ENCODE measurements at regions of chr21 and their contacts with region 1.

Region 1: GRCh38 chr21:33542640-33543504 is at the start of gene SON:
- DNase-seq: peak; percentile 95
- ATAC-seq: peak; percentile 94
- H3K4me3 ChIP-seq: peak within 1 kb of the TSS; percentile 96
- H3K27ac ChIP-seq: peak within 1 kb of the TSS; percentile 100
- H3K4me1 ChIP-seq: no peaks in the 10 kb centered on the region
- H3K27me3 ChIP-seq: no peaks in the 10 kb centered on the region
- CTCF ChIP-seq: no peak
- EP300 ChIP-seq: no peak
- POLR2A ChIP-seq: peak; percentile 89
- RAD21 ChIP-seq: no peak
- polyA plus RNA-seq, gene SON: 418 to 788 TPM

Region 2: GRCh38 chr21:32770871-32771523 is 771.9 kb before region 1 on chr21:
- CTCF ChIA-PET with region 1: no interaction called
- POLR2A ChIA-PET with region 1: no interaction called
- RAD21 ChIA-PET with region 1: no interaction called
- SMC1A ChIA-PET with region 1: no interaction called
- in situ Hi-C with region 1: no loop called
- intact Hi-C with region 1: loop called (anchors 5 kb)
- DNase-seq: no peak
- ATAC-seq: peak; percentile 65
- H3K4me3 ChIP-seq: peak overlapping the region; percentile 90
- H3K27ac ChIP-seq: peak overlapping the region; percentile 87
- H3K4me1 ChIP-seq: peaks cover 9% of the 10 kb centered on the region; the same call in 1 of the 2 replicates
- H3K27me3 ChIP-seq: no peaks in the 10 kb centered on the region
- CTCF ChIP-seq: no peak
- EP300 ChIP-seq: no peak
- POLR2A ChIP-seq: 0 out of 2 replicates have a peak, but pooled peaks have one; percentile 8
- RAD21 ChIP-seq: no peak

Region 3: DNA sequence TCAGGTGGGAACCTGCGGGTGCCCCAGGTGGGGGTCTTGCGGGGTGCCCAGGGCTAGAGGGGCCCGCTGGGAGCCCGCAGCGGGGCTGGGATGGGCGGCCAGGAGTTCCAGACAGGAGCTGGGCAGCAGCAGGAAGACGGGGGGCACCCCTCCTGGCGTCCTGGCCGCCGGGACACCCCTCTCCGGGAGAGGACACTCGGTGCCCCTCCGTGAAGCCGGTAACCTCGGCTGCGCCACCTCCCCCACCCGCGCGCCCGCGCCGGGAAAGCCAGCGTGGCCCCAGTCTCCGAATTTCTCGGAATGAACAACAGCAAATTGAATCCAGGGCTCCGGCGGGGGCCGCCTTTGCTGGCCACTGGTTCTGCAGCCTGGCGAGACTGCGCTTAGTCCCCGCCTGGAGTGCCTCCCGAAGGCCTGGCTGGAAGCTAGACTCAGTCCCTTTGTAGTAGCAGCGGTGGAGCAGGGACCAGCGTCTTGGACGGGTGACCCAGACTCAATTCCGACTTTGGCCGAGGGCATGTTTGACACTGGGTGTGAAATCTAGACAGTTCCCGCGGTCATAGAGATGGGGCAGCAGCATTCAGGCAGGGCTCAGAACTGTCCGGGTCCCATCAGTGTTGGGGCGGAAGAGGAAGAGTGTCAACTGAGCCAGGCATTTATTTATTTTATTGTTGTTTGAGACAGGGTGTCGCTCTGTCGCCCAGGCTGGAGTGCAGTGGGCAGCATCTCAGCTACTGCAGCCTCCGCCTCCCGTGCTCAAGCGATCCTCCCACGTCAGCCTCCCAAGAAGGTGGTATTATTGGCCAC is 138.9 kb before region 1 on chr21:
- CTCF ChIA-PET with region 1: no interaction called
- POLR2A ChIA-PET with region 1: no interaction called
- RAD21 ChIA-PET with region 1: no interaction called
- SMC1A ChIA-PET with region 1: no interaction called
- in situ Hi-C with region 1: no loop called
- intact Hi-C with region 1: loop called (anchors 10 kb)
- DNase-seq: no peak
- ATAC-seq: peak; percentile 60
- H3K4me3 ChIP-seq: peak overlapping the region; percentile 84
- H3K27ac ChIP-seq: peak overlapping the region; percentile 97
- H3K4me1 ChIP-seq: peaks cover 15% of the 10 kb centered on the region
- H3K27me3 ChIP-seq: no peaks in the 10 kb centered on the region
- CTCF ChIP-seq: no peak
- EP300 ChIP-seq: no peak
- POLR2A ChIP-seq: peak; percentile 77
- RAD21 ChIP-seq: no peak

Region 4: GRCh38 chr21:33491373-33492102 is 51.3 kb before region 1 on chr21 and contains the start of gene DNAJC28:
- CTCF ChIA-PET with region 1: no interaction called
- POLR2A ChIA-PET with region 1: interaction called, 13 read pairs
- RAD21 ChIA-PET with region 1: interaction called, 5 read pairs
- SMC1A ChIA-PET with region 1: interaction called, 6 read pairs
- in situ Hi-C with region 1: no loop called
- intact Hi-C with region 1: no loop called
- DNase-seq: peak; percentile 80
- ATAC-seq: peak; percentile 99
- H3K4me3 ChIP-seq: peak within 1 kb of the TSS; percentile 68
- H3K27ac ChIP-seq: peak within 1 kb of the TSS; percentile 48; the same call in 1 of the 2 replicates
- H3K4me1 ChIP-seq: no peaks in the 10 kb centered on the region
- H3K27me3 ChIP-seq: no peaks in the 10 kb centered on the region
- CTCF ChIP-seq: no peak
- EP300 ChIP-seq: no peak
- POLR2A ChIP-seq: peak; percentile 65
- RAD21 ChIP-seq: no peak
- polyA plus RNA-seq, gene DNAJC28: 0.53 to 0.77 TPM

Region 5: GRCh38 chr21:33588485-33589335 is 45.8 kb after region 1 on chr21 and contains the start of gene DONSON:
- CTCF ChIA-PET with region 1: interaction called, 5 read pairs
- POLR2A ChIA-PET with region 1: interaction called, 5 read pairs
- RAD21 ChIA-PET with region 1: interaction called, 3 read pairs
- SMC1A ChIA-PET with region 1: interaction called, 4 read pairs
- in situ Hi-C with region 1: no loop called
- intact Hi-C with region 1: loop called (anchors 5 kb)
- DNase-seq: peak; percentile 31
- ATAC-seq: peak; percentile 96
- H3K4me3 ChIP-seq: peak within 1 kb of the TSS; percentile 92
- H3K27ac ChIP-seq: peak within 1 kb of the TSS; percentile 82
- H3K4me1 ChIP-seq: no peaks in the 10 kb centered on the region
- H3K27me3 ChIP-seq: no peaks in the 10 kb centered on the region
- CTCF ChIP-seq: no peak
- EP300 ChIP-seq: no peak
- POLR2A ChIP-seq: peak; percentile 84
- RAD21 ChIP-seq: no peak
- polyA plus RNA-seq, gene DONSON: 13.6 to 25.8 TPM